WTC11 (cell line): ENCODE measurements at regions of chr4 and their contacts with region 1.

Region 1: GRCh38 chr4:53714236-53715140 is 123.2 kb upstream of the LNX1 start:
- DNase-seq: no peak
- ATAC-seq: no peak
- H3K4me3 Mint-ChIP-seq: no peak overlapping the region
- H3K27ac Mint-ChIP-seq: no peak overlapping the region
- H3K4me1 Mint-ChIP-seq: peaks cover 15% of the 10 kb centered on the region
- H3K27me3 Mint-ChIP-seq: no peaks in the 10 kb centered on the region
- CTCF ChIP-seq: no peak

Region 2: GRCh38 chr4:53804719-53805118 is 90.2 kb after region 1 on chr4:
- CTCF ChIA-PET with region 1: interaction called, 12 read pairs
- POLR2A ChIA-PET with region 1: no interaction called
- DNase-seq: peak; percentile 72
- ATAC-seq: peak; percentile 82
- H3K4me3 Mint-ChIP-seq: no peak overlapping the region
- H3K27ac Mint-ChIP-seq: no peak overlapping the region
- H3K4me1 Mint-ChIP-seq: no peaks in the 10 kb centered on the region
- H3K27me3 Mint-ChIP-seq: no peaks in the 10 kb centered on the region
- CTCF ChIP-seq: peak; percentile 28; the same call in 1 of the 2 replicates